PC-9 (cell line): ENCODE measurements at regions of chr14 and their contacts with region 1.

Region 1: GRCh38 chr14:52695481-52696091 is at the start of gene ERO1A:
- DNase-seq: peak; percentile 69 to 85
- H3K4me3 ChIP-seq: peak within 1 kb of the TSS; percentile 62
- H3K27ac ChIP-seq: peak within 1 kb of the TSS; percentile 92
- H3K4me1 ChIP-seq: peaks cover 55% of the 10 kb centered on the region
- H3K27me3 ChIP-seq: no peaks in the 10 kb centered on the region
- CTCF ChIP-seq: no peak
- total RNA-seq, gene ERO1A: 83.6 and 83.9 TPM in 2 replicates

Region 2: DNA sequence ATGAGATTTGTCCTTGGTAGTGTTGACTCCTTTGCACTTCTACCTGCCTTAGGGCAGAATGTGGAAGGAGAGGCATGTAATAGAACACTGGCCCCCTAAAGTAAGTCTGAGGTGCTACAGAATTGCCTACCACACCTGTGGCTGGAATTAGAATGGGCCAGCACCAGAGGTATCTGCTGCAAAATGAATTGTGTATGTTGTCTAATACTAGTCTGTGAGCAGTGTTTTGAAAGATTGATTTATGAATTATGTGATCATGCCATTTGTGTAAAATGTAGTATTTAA is 28.7 kb after region 1 on chr14:
- CTCF ChIA-PET with region 1: no interaction called
- POLR2A ChIA-PET with region 1: interaction called, 11 read pairs
- intact Hi-C with region 1: no loop called
- DNase-seq: no peak
- H3K4me3 ChIP-seq: no peak overlapping the region
- H3K27ac ChIP-seq: no peak overlapping the region
- H3K4me1 ChIP-seq: no peaks in the 10 kb centered on the region; the same call in 1 of the 2 replicates
- H3K27me3 ChIP-seq: no peaks in the 10 kb centered on the region
- CTCF ChIP-seq: no peak

Region 3: DNA sequence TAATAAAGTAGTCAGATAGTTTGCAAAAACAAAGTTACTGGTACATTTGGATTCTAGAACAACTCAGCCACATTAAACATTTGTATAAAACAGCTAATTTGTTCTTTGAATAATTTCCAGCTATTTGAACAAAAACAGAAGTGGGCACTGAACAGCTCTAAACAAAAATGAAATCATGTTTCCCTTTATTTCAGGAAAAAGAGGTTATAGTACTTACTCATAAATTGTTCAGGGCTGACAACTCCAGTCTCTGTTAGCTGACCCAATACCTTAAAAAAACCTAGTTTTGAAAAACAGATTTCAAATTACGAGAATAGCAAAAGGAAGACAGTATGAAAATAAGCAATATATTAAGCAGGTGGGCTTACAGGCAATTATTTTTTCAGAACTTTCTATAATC is 87.6 kb after region 1 on chr14:
- CTCF ChIA-PET with region 1: no interaction called
- POLR2A ChIA-PET with region 1: interaction called, 10 read pairs
- intact Hi-C with region 1: no loop called
- DNase-seq: no peak
- H3K4me3 ChIP-seq: no peak overlapping the region
- H3K27ac ChIP-seq: no peak overlapping the region
- H3K4me1 ChIP-seq: peaks cover under 1% of the 10 kb centered on the region; the same call in 1 of the 2 replicates
- H3K27me3 ChIP-seq: no peaks in the 10 kb centered on the region
- CTCF ChIP-seq: no peak

Region 4: GRCh38 chr14:52808101-52808500 is 112.5 kb after region 1 on chr14:
- CTCF ChIA-PET with region 1: no interaction called
- POLR2A ChIA-PET with region 1: no interaction called
- intact Hi-C with region 1: no loop called
- DNase-seq: no peak
- H3K4me3 ChIP-seq: no peak overlapping the region
- H3K27ac ChIP-seq: no peak overlapping the region
- H3K4me1 ChIP-seq: no peaks in the 10 kb centered on the region
- H3K27me3 ChIP-seq: no peaks in the 10 kb centered on the region
- CTCF ChIP-seq: no peak

Region 5: GRCh38 chr14:52891800-52892199 is 196.2 kb after region 1 on chr14:
- CTCF ChIA-PET with region 1: no interaction called
- POLR2A ChIA-PET with region 1: interaction called, 11 read pairs
- intact Hi-C with region 1: no loop called
- DNase-seq: no peak
- H3K4me3 ChIP-seq: no peak overlapping the region
- H3K27ac ChIP-seq: no peak overlapping the region
- H3K4me1 ChIP-seq: no peaks in the 10 kb centered on the region
- H3K27me3 ChIP-seq: no peaks in the 10 kb centered on the region
- CTCF ChIP-seq: no peak

Region 6: DNA sequence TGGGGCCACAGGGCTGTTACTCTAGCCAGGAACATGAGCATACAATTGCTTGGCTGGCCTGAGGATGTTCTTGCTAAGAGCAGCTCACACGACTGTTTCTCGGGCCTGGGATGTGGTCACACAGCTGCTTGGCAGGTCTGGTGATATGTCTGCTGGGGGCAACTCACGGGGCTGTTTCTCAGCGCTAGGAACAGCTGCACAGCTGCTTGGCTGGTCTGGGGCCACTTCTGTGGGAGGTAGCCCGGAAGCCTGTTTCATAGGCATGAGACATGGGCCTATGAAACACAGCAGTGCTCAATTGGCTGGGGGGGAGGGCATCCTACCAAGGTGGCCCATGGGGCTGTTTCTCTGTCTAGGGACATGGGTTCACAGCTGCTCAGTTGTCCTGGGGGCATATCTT is 531.0 kb after region 1 on chr14:
- CTCF ChIA-PET with region 1: no interaction called
- POLR2A ChIA-PET with region 1: no interaction called
- intact Hi-C with region 1: no loop called
- DNase-seq: no peak
- H3K4me3 ChIP-seq: no peak overlapping the region
- H3K27ac ChIP-seq: no peak overlapping the region
- H3K4me1 ChIP-seq: no peaks in the 10 kb centered on the region
- H3K27me3 ChIP-seq: no peaks in the 10 kb centered on the region
- CTCF ChIP-seq: no peak